Activated CD4-positive, alpha-beta T cell treated with anti-CD3 and anti-CD28 coated beads, Interleukin-2, amount 10 ng/mL, durations not matched to agents 24 days and 14 days (primary cell): ENCODE measurements at regions of chr12 and their contacts with region 1.

Region 1: DNA sequence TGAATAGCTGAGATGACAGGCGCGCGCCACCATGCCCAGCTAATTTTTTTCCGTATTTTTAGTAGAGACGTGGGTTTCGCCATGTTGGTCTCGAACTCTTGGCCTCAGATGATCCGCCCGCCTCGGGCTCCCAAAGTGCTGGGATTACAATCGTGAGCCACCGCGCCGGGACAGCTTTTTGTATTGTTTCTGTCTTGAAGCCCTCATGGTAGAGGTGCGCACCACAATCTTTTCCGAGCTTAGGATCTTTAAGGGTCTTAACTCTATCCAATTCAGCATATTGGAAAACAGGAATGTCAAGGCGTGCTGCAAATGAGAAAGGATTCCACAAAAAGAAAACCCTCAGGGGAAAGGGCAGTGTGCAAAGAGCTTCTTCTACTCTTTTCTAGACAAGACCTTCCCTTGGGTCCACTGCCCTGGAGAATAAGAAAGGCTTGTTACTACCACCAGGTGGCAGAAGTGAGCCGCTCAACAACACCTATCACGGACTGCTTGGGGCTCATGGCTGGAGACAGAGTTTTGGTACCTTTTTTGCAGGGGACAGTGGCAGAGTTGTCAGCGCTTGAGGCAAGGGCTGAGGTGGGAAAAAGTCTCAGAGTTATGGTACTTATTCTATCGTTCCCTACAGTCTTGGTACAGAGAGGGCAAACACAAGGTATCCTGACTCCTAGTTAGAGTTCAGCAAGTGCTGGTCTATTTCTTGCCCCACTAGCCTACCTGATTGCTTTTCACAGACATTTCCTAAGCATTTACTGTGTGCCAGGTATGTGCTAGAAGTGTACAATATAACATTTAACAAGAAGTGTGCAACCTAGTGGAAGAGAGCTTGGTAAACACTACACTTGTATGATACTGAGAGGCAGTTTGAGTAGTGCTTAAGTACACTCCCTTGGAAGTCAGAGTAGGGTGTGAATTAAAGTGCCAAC is 16.4 kb upstream of the SP7 start:
- DNase-seq: peak; percentile 95
- H3K4me3 Mint-ChIP-seq: no peak overlapping the region
- H3K27ac Mint-ChIP-seq: peak overlapping the region; percentile 31
- H3K4me1 Mint-ChIP-seq: peaks cover 6% of the 10 kb centered on the region
- H3K27me3 Mint-ChIP-seq: no peaks in the 10 kb centered on the region

Region 2: GRCh38 chr12:53424626-53425514 is 72.3 kb after region 1 on chr12:
- intact Hi-C with region 1: loop called (anchors 1 kb)
- DNase-seq: no peak
- H3K4me3 Mint-ChIP-seq: no peak overlapping the region
- H3K27ac Mint-ChIP-seq: no peak overlapping the region
- H3K4me1 Mint-ChIP-seq: peaks cover 11% of the 10 kb centered on the region
- H3K27me3 Mint-ChIP-seq: no peaks in the 10 kb centered on the region

Region 3: DNA sequence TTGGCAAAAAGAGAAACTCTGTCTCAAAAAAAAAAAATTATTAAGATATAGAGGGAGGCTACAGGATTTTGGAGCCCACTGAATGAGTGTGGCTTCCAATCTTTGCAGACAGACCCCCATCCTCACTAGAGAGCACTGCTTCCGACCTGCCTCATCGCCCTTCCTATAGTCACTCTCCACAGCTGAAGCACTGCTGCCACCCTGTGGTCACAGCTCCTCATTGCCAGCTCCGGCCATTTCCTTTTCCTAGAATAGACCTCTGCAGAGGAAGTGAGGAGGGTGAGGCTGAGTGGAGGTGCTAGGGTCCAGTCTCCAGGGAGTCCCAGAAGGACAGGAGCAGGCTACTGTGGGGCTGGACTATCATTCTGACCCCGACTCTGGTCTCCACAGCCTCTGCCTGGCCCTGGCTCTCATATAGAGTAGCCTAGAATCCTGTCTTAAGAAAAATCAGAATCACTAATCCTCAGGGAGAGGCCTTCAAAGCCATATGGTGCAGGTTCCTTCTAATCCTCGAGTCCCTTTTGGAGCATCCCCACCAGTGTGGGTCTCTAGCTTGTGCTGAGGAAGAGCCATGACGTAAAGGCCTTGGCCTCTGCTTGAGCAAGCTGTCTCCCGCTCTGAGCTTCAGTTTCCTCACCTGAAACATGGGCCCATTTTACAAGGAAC is 156.1 kb after region 1 on chr12:
- intact Hi-C with region 1: loop called (anchors 1 kb)
- DNase-seq: peak; percentile 96
- H3K4me3 Mint-ChIP-seq: no peak overlapping the region
- H3K27ac Mint-ChIP-seq: peak overlapping the region; percentile 46
- H3K4me1 Mint-ChIP-seq: peaks cover 10% of the 10 kb centered on the region
- H3K27me3 Mint-ChIP-seq: no peaks in the 10 kb centered on the region

Region 4: DNA sequence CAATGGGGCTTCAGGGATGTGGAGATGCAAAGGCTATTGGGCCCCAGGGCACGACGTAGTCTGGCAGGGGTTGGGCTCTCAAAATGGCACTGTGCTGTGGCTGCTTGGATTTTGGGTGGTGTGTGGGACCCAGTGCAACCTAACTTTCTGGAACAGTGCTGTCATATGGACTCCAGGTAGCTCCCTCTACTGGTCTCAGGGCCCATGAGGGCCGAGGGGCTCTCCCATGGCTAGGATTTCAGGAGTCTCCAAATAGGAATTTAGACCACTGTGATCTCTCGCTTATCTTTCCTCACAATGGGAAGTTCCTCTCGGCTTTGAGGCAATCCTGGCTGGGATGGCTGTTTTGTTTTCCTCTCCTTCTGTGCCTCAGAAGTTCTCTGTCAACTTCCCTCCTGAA is 1433.5 kb after region 1 on chr12:
- intact Hi-C with region 1: no loop called
- DNase-seq: no peak
- H3K4me3 Mint-ChIP-seq: no peak overlapping the region
- H3K27ac Mint-ChIP-seq: no peak overlapping the region
- H3K4me1 Mint-ChIP-seq: no peaks in the 10 kb centered on the region
- H3K27me3 Mint-ChIP-seq: peaks cover 3% of the 10 kb centered on the region